SK-N-SH (cell line): ENCODE measurements at regions of chr11 and their contacts with region 1.

Region 1: DNA sequence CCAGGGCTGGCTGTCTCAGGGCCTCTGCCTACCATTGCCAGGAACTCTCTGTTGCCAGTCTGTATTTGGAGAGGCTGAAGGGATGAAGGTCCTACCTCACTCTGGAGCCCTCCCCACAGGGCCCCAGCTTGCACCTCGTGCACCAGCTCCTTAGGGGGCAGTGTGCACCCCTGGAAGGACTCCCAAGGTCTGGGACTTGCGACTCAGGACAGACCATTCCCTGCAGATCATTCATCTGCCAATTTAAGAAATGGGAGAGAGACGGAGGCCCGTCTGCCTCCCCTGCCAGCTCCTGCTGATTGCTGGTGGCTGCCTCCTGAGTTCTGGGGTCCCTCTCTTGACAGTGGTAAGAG is 27.5 kb upstream of the MALAT1 start:
- DNase-seq: peak; percentile 70
- H3K4me3 ChIP-seq: peak overlapping the region; percentile 12 to 47; a peak in 3 of 4 replicates
- H3K27ac ChIP-seq: peak overlapping the region; percentile 68 to 99
- H3K4me1 ChIP-seq: peaks cover 10 to 16% of the 10 kb centered on the region in 2 experiments; a peak in 3 of 4 replicates
- H3K27me3 ChIP-seq: no peaks in the 10 kb centered on the region
- CTCF ChIP-seq: peak; percentile 72
- EP300 ChIP-seq: no peak
- RAD21 ChIP-seq: peak; percentile 75

Region 2: GRCh38 chr11:65459552-65459951 is 11.8 kb before region 1 on chr11:
- CTCF ChIA-PET with region 1: interaction called, 13 read pairs
- POLR2A ChIA-PET with region 1: interaction called, 4 read pairs
- DNase-seq: no peak
- H3K4me3 ChIP-seq: no peak overlapping the region
- H3K27ac ChIP-seq: no peak overlapping the region
- H3K4me1 ChIP-seq: peaks cover 6 to 8% of the 10 kb centered on the region in 2 experiments; a peak in 2 of 4 replicates
- H3K27me3 ChIP-seq: no peaks in the 10 kb centered on the region
- CTCF ChIP-seq: no peak
- EP300 ChIP-seq: no peak
- RAD21 ChIP-seq: no peak

Region 3: DNA sequence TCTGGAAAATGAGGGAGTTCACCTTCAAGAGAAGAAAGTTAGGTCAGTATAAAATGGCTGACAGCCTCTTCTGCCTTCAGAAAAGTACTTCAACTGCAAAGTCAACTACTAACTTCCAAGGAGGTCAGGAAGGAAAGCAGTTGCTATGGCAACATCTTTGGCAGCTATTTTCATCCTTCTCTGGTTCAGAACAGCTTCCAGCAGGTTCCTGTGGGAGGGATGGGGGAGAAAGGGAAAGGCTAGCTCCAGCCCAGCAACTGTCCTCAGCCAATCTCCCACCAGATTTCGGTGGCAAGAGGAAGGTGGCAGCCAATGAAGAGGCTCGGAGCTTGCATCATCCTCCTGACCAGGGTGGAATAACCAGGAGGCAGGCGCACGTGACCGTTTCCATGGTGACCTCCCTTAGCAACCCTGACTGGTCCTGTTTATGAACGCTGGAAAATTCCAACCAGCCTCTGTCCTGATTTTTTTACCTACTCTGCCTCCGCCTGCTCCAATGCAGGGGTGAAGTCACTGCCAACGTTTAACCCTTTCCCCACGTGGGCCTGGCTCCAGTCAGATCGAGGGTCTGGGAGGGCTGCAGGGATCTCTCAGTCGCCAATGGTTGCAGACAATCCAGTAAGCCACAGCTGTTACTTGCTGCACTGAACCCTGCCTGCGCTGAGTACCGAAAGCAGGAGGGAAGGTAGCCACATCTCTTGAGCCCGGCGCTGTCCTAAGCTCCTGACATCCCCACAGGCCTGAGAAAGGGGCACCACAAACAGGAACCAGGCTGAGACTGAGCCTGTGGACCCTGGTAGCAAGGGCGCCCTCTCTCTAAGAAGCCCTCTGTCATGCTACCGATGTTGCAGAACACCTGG is 16.3 kb after region 1 on chr11:
- CTCF ChIA-PET with region 1: interaction called, 58 read pairs
- POLR2A ChIA-PET with region 1: interaction called, 591 read pairs
- DNase-seq: peak; percentile 90
- H3K4me3 ChIP-seq: peak overlapping the region; percentile 25 to 50
- H3K27ac ChIP-seq: peak overlapping the region; percentile 100
- H3K4me1 ChIP-seq: peaks cover 71 to 72% of the 10 kb centered on the region in 2 experiments
- H3K27me3 ChIP-seq: no peaks in the 10 kb centered on the region
- CTCF ChIP-seq: no peak
- EP300 ChIP-seq: peak; percentile 79 to 90
- RAD21 ChIP-seq: peak; percentile 40

Region 4: DNA sequence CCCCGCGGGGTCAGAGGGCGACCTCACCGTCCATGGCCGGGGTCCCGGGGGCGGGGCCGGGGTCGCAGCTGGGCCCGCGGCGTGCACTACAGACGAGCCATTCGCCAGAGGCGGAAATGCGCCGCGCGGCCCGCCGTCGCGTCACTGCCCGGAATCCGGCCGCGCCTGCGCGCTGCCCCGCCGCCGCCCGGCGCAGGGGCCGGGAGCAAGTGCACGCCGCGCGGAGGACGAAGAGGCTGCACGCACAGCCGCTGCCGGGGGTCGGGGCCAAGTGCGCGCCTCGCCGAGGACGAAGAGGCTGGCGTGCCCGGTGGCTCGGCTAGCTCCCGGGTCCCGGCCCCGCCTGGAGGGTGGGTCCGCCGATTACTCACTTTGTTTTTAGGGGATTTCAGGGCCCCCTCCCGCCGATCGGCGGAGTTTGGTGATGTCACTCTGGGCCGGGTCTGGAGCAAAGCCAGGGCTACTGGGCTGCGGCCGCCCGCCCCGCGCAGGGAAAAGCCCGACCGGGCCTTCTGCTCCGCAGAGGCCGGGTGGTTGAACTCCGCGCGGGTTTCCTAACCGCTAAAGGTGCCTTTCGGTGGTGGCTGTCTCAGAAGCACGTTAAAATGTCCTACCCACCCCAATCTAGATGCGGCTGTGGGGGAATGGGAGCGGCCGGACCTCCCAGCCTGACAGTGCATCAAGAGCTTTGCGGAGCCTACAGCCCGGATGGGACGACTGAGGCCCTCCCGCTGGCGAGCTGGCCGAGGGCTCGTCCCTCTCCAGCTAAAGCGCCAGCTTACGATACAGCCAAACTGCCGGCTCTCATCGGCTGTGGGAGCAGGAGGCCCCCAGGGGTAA is 191.6 kb after region 1 on chr11 and contains the start of gene RELA:
- CTCF ChIA-PET with region 1: no interaction called
- POLR2A ChIA-PET with region 1: no interaction called
- DNase-seq: peak; percentile 98
- H3K4me3 ChIP-seq: peak within 1 kb of the TSS; percentile 83 to 90
- H3K27ac ChIP-seq: peak within 1 kb of the TSS; percentile 95 to 97
- H3K4me1 ChIP-seq: peaks cover 9% of the 10 kb centered on the region in 2 experiments; a peak in 3 of 4 replicates
- H3K27me3 ChIP-seq: no peaks in the 10 kb centered on the region
- CTCF ChIP-seq: no peak
- EP300 ChIP-seq: no peak
- RAD21 ChIP-seq: no peak
- polyA plus RNA-seq, gene RELA: 28.1 and 49.5 TPM in 2 replicates